ENCODE measurements at regions of chr12 and their contacts with region 1.

Region 1: DNA sequence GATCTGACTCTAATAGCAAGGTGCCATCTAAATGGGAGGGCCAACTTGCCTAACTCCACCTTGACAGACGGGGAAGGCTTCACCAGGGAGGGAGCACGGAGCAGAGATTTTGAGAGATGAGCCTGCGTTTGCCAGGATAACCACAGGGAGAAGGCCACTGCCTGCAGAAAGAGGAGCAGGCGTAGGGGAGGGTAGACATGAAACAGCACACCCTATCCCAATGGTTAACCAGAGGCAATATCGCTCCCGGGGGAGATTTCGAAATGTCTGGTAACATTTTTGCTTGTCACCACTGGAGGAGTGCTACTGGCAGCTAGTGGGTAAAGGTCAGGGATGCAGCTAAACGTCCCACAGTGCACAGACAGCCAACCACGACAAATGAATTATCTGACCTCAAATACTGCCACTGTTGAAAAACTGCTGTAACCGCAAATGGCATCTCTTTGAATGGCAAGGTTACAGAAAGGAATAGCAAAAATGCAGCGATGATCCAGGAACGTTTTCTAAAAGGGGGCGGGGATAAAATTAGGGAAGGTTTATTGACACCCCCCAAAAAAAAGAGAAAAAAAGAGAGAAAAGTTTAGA is 126.0 kb upstream of the ATF7IP start:
- DNase-seq: no peak
- H3K4me3 ChIP-seq: no peak overlapping the region
- CTCF ChIP-seq: peak; percentile 28

Region 2: GRCh38 chr12:14284184-14284722 is 44.8 kb after region 1 on chr12:
- in situ Hi-C with region 1: no loop called
- DNase-seq: no peak
- H3K4me3 ChIP-seq: no peak overlapping the region
- CTCF ChIP-seq: no peak

Region 3: DNA sequence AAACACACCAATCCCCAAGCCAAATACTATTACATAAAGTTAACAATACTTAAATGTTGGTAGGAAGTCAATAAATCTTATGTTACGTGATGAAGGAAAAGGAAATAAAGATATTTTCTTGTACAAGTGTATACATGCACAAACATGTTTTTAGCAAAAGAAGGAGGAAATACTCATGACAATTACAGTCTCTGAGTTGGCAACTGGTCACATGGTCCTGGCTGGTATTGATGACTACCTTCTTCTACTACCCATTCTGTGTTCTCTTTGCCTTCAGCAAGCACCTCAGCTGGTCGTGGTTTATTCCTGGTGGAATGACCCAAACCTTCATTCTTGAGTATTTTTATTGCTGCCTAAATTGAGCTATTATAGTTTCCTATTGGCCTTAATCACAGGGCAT is 243.4 kb after region 1 on chr12:
- in situ Hi-C with region 1: loop called (anchors 5 kb)
- DNase-seq: no peak
- H3K4me3 ChIP-seq: no peak overlapping the region
- CTCF ChIP-seq: no peak

Region 4: DNA sequence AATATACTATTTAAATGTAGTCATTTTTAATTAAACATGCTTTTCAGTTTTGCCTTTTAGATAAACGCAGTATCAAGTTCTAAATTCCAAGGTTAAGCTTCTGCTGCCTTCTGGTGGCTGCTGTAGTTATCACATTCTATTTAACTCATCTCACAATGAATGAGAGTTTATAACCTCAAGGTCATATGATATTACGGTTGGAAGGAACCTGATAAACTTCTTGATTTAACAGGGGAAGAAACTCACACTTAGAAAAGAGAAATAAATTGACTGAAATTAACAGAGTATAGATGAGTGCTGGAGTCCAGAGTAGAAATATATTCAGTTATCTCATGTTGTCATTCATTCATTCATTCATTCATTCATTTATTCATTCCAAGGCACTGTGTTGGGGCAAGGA is 425.1 kb after region 1 on chr12:
- in situ Hi-C with region 1: loop called (anchors 5 kb)
- DNase-seq: no peak
- H3K4me3 ChIP-seq: no peak overlapping the region
- CTCF ChIP-seq: peak; percentile 43